ENCODE measurements at regions of chr10 and their contacts with region 1.

Region 1: DNA sequence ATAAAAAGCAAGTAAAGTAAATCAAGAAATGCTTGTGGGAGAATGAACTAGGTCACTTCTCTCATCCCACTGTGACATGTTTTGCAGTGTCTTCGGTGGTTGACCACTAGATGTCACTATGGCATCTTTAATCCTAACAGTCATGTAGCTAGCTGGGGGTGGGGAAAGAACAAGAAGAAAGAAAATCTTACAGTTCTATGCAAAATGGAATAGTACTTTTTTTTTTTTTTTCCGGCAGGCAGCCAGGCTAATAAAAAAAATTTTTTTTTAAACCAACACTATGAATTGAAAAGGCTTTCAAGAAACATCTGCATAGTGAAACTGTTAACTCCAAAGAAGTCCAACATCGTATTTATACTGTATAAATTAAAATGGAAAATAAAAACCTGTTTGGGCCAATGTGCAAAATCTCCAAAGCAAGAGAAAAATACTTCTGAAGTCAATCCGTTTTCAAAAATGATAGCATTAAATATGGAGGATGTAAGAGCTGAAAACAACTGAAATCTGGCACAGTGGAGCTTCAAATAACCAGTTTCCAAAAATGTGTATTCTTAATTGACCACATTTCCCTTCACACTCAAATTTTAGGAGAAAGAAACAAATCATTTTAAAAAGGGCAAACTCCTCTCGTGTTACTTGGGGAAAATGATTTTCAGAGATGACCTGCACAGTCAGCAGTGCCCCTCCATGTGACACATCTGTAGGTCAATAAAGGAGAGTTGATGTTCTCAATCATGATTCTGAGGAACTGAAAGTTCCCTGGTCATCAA is 38.5 kb downstream of the CDK1 start:
- DNase-seq: peak; percentile 75
- ATAC-seq: peak; percentile 65
- H3K4me3 ChIP-seq: no peak overlapping the region
- H3K4me3 Mint-ChIP-seq: no peak overlapping the region
- H3K27ac ChIP-seq: no peak overlapping the region
- H3K27ac Mint-ChIP-seq: no peak overlapping the region
- H3K4me1 ChIP-seq: peaks cover 0 to 3% of the 10 kb centered on the region in 2 donors
- H3K4me1 Mint-ChIP-seq: peaks cover 7% of the 10 kb centered on the region
- H3K27me3 ChIP-seq: no peaks in the 10 kb centered on the region
- H3K27me3 Mint-ChIP-seq: no peaks in the 10 kb centered on the region
- CTCF ChIP-seq: peak; percentile 93

Region 2: GRCh38 chr10:60271319-60272040 is 545.3 kb before region 1 on chr10:
- CTCF ChIA-PET with region 1: no interaction called
- POLR2A ChIA-PET with region 1: no interaction called
- intact Hi-C with region 1: no loop called
- DNase-seq: peak; percentile 56
- ATAC-seq: peak; percentile 87
- H3K4me3 ChIP-seq: no peak overlapping the region
- H3K4me3 Mint-ChIP-seq: peak overlapping the region; percentile 20
- H3K27ac ChIP-seq: peak overlapping the region in 1 of 2 donors; percentile 7
- H3K27ac Mint-ChIP-seq: peak overlapping the region; percentile 71
- H3K4me1 ChIP-seq: peaks cover 8 to 12% of the 10 kb centered on the region in 2 donors
- H3K4me1 Mint-ChIP-seq: peaks cover 11% of the 10 kb centered on the region
- H3K27me3 ChIP-seq: no peaks in the 10 kb centered on the region
- H3K27me3 Mint-ChIP-seq: no peaks in the 10 kb centered on the region
- CTCF ChIP-seq: no peak

Region 3: DNA sequence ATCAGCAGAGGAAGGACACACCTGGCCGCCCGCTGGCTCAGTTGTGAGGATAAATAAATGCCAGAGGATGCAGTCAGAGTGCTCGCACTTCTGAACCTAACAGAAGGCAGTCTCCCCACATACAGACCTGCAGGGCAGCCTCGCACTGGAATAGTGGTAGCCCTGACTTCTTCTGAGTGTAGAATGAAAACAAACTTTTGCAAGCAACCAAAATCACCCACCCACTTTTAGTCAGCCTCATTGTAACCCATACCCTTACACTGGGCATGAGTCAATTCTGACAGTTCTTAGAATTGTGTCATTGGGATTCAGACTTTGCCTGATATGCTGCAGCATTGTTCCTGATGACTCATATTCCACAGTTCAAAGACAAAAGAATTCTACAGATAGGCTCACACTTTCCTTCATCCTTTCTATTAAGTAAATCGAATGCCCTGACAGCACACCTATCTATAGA is 205.5 kb before region 1 on chr10:
- CTCF ChIA-PET with region 1: no interaction called
- POLR2A ChIA-PET with region 1: no interaction called
- intact Hi-C with region 1: no loop called
- DNase-seq: no peak
- ATAC-seq: no peak
- H3K4me3 ChIP-seq: no peak overlapping the region
- H3K4me3 Mint-ChIP-seq: no peak overlapping the region
- H3K27ac ChIP-seq: no peak overlapping the region
- H3K27ac Mint-ChIP-seq: no peak overlapping the region
- H3K4me1 ChIP-seq: no peaks in the 10 kb centered on the region
- H3K4me1 Mint-ChIP-seq: no peaks in the 10 kb centered on the region
- H3K27me3 ChIP-seq: no peaks in the 10 kb centered on the region
- H3K27me3 Mint-ChIP-seq: peaks cover 4% of the 10 kb centered on the region
- CTCF ChIP-seq: no peak

Region 4: GRCh38 chr10:60789340-60789739 is 27.5 kb before region 1 on chr10:
- CTCF ChIA-PET with region 1: no interaction called
- POLR2A ChIA-PET with region 1: no interaction called
- intact Hi-C with region 1: no loop called
- DNase-seq: no peak
- ATAC-seq: no peak
- H3K4me3 ChIP-seq: no peak overlapping the region
- H3K4me3 Mint-ChIP-seq: no peak overlapping the region
- H3K27ac ChIP-seq: no peak overlapping the region
- H3K27ac Mint-ChIP-seq: no peak overlapping the region
- H3K4me1 ChIP-seq: peaks cover 0 to 4% of the 10 kb centered on the region in 2 donors
- H3K4me1 Mint-ChIP-seq: peaks cover 17% of the 10 kb centered on the region
- H3K27me3 ChIP-seq: no peaks in the 10 kb centered on the region
- H3K27me3 Mint-ChIP-seq: no peaks in the 10 kb centered on the region
- CTCF ChIP-seq: no peak

Region 5: DNA sequence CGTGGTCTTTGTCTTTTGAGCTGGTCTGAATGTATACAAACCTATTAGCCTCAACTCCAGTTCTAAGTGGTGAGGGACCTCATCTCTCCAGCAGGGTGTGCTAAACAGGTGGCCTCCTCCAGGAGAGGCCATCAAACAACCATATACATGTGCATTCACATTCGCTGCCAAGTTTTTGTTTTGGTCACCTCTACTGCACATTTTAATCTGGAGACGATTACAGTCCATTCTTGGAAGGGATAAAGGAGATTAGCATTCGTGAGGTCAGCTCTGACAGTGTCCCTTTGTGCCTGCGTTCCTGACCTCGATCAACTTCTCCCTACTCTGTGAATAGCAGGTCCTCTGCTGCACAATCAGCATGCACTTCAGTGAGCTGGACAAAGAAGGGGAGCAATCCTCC is 66.4 kb after region 1 on chr10:
- CTCF ChIA-PET with region 1: no interaction called
- POLR2A ChIA-PET with region 1: no interaction called
- intact Hi-C with region 1: no loop called
- DNase-seq: peak; percentile 18
- ATAC-seq: no peak
- H3K4me3 ChIP-seq: no peak overlapping the region
- H3K4me3 Mint-ChIP-seq: no peak overlapping the region
- H3K27ac ChIP-seq: no peak overlapping the region
- H3K27ac Mint-ChIP-seq: no peak overlapping the region
- H3K4me1 ChIP-seq: no peaks in the 10 kb centered on the region
- H3K4me1 Mint-ChIP-seq: no peaks in the 10 kb centered on the region
- H3K27me3 ChIP-seq: no peaks in the 10 kb centered on the region
- H3K27me3 Mint-ChIP-seq: peaks cover 4% of the 10 kb centered on the region
- CTCF ChIP-seq: no peak

Region 6: DNA sequence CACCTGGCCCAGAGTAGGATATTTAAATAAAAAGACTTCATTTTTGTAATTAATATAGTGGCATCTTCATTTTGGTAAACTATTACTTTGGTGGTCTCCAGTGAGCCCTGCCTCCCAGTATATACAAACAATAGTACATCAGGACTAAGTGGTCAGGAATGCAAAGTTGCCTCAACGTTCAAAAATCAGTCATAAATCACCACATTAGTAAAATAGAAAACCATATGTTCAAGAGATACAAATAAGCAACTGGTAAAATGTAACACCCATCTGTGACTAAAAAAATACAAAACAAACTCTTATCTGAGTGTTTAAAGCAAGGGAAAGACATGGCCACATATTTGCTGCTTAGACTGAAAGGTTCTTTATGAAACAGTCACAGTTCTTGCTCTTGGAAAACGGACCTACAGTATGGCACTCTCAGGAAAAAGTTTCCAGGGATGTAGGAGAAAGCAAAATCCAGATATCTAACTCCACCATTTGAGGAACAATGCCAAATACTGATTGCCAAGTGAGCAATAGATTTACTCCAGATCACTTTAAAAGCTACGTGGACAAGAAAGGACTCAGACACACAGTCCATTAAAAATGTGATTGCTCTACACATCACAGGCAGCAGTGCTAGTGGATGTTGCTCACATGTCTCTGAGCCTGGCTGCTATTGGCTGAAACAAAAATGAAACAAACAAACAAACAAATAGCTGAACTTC is 142.2 kb after region 1 on chr10:
- CTCF ChIA-PET with region 1: interaction called, 23 read pairs
- POLR2A ChIA-PET with region 1: no interaction called
- intact Hi-C with region 1: loop called (anchors 1 kb)
- DNase-seq: no peak
- ATAC-seq: no peak
- H3K4me3 ChIP-seq: no peak overlapping the region
- H3K4me3 Mint-ChIP-seq: no peak overlapping the region
- H3K27ac ChIP-seq: no peak overlapping the region
- H3K27ac Mint-ChIP-seq: no peak overlapping the region
- H3K4me1 ChIP-seq: peaks cover 12 to 13% of the 10 kb centered on the region in 2 donors
- H3K4me1 Mint-ChIP-seq: peaks cover 17% of the 10 kb centered on the region
- H3K27me3 ChIP-seq: no peaks in the 10 kb centered on the region
- H3K27me3 Mint-ChIP-seq: peaks cover 8% of the 10 kb centered on the region
- CTCF ChIP-seq: no peak

Region 7: GRCh38 chr10:60964257-60965235 is 147.7 kb after region 1 on chr10:
- CTCF ChIA-PET with region 1: interaction called, 23 read pairs
- POLR2A ChIA-PET with region 1: no interaction called
- intact Hi-C with region 1: loop called (anchors 1 kb)
- DNase-seq: peak; percentile 67
- ATAC-seq: peak; percentile 58
- H3K4me3 ChIP-seq: no peak overlapping the region
- H3K4me3 Mint-ChIP-seq: no peak overlapping the region
- H3K27ac ChIP-seq: no peak overlapping the region
- H3K27ac Mint-ChIP-seq: no peak overlapping the region
- H3K4me1 ChIP-seq: peaks cover 12 to 13% of the 10 kb centered on the region in 2 donors
- H3K4me1 Mint-ChIP-seq: peaks cover 20% of the 10 kb centered on the region
- H3K27me3 ChIP-seq: no peaks in the 10 kb centered on the region
- H3K27me3 Mint-ChIP-seq: peaks cover 5% of the 10 kb centered on the region
- CTCF ChIP-seq: peak; percentile 93

Region 8: GRCh38 chr10:61135276-61135721 is 318.5 kb after region 1 on chr10:
- CTCF ChIA-PET with region 1: interaction called, 4 read pairs
- POLR2A ChIA-PET with region 1: no interaction called
- intact Hi-C with region 1: loop called (anchors 10 kb)
- DNase-seq: peak; percentile 84
- ATAC-seq: peak; percentile 93
- H3K4me3 ChIP-seq: peak overlapping the region in 1 of 5 experiments; percentile 31
- H3K4me3 Mint-ChIP-seq: peak overlapping the region; percentile 76
- H3K27ac ChIP-seq: peak overlapping the region; percentile 67 to 89
- H3K27ac Mint-ChIP-seq: peak overlapping the region; percentile 92
- H3K4me1 ChIP-seq: peaks cover 32 to 34% of the 10 kb centered on the region in 2 donors
- H3K4me1 Mint-ChIP-seq: peaks cover 43% of the 10 kb centered on the region
- H3K27me3 ChIP-seq: no peaks in the 10 kb centered on the region
- H3K27me3 Mint-ChIP-seq: no peaks in the 10 kb centered on the region
- CTCF ChIP-seq: no peak